Dorsolateral prefrontal cortex (tissue), 120 donors: ENCODE measurements at regions of chr17 and their contacts with region 1.

Region 1: GRCh38 chr17:7296189-7296902 is 1.9 kb upstream of the YBX2 start:
- DNase-seq: peak in 9 of 10 donors; percentile 58 to 89 (median 75)
- H3K4me3 ChIP-seq: peak overlapping the region in 57 of 59 donors; percentile 10 to 58 (median 39)
- H3K27ac ChIP-seq: peak overlapping the region in 8 of 59 donors; percentile 0 to 59 (median 32)
- H3K27me3 ChIP-seq: peaks cover 0 to 47% (median 18%) of the 10 kb centered on the region in 45 donors
- CTCF ChIP-seq: peak; percentile 58 to 99 (median 95)

Region 2: DNA sequence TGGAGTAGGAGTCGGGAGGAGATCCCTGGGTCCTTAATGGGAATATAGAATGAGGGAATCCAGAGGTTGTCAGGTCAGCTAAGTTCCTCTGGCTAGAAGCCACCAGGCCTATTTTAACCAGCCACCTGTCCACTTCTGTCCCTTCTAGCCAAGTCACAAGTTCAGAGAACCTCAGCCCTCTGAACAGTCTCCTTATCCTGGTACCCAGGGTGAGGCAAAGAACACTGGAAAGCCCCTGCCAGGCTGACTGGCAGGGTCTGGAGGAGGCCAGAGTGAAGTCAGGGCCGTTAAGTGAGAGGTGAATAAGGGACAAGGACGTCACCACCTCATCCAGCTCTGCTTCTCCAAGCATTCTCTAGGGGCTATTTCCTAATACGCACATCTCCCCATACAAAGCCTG is 47.5 kb before region 1 on chr17:
- intact Hi-C with region 1: no loop called
- DNase-seq: no peak
- H3K4me3 ChIP-seq: peak overlapping the region in 2 of 59 donors; percentile 90 to 91
- H3K27ac ChIP-seq: peak overlapping the region in 2 of 59 donors; percentile 8 to 29
- H3K27me3 ChIP-seq: no peaks in the 10 kb centered on the region
- CTCF ChIP-seq: no peak

Region 3: GRCh38 chr17:7258731-7259554 is 37.4 kb before region 1 on chr17:
- intact Hi-C with region 1: loop called in 1 of 2 experiments (anchors 5 kb)
- DNase-seq: no peak
- H3K4me3 ChIP-seq: no peak overlapping the region
- H3K27ac ChIP-seq: no peak overlapping the region
- H3K27me3 ChIP-seq: peaks cover 0 to 38% (median 33%) of the 10 kb centered on the region in 45 donors
- CTCF ChIP-seq: no peak

Region 4: GRCh38 chr17:7280519-7281429 is 15.6 kb before region 1 on chr17:
- intact Hi-C with region 1: loop called (anchors 1 to 2 kb)
- DNase-seq: peak; percentile 65 to 87 (median 80)
- H3K4me3 ChIP-seq: peak overlapping the region; percentile 18 to 65 (median 47)
- H3K27ac ChIP-seq: peak overlapping the region in 48 of 59 donors; percentile 6 to 90 (median 70)
- H3K27me3 ChIP-seq: peaks cover 0 to 28% (median 13%) of the 10 kb centered on the region in 45 donors
- CTCF ChIP-seq: peak; percentile 76 to 99 (median 94)

Region 5: GRCh38 chr17:7363311-7363710 is 67.0 kb after region 1 on chr17:
- intact Hi-C with region 1: no loop called
- DNase-seq: no peak
- H3K4me3 ChIP-seq: no peak overlapping the region
- H3K27ac ChIP-seq: no peak overlapping the region
- H3K27me3 ChIP-seq: no peaks in the 10 kb centered on the region
- CTCF ChIP-seq: no peak